OCI-LY7 (cell line): ENCODE measurements at regions of chr3 and their contacts with region 1.

Region 1: DNA sequence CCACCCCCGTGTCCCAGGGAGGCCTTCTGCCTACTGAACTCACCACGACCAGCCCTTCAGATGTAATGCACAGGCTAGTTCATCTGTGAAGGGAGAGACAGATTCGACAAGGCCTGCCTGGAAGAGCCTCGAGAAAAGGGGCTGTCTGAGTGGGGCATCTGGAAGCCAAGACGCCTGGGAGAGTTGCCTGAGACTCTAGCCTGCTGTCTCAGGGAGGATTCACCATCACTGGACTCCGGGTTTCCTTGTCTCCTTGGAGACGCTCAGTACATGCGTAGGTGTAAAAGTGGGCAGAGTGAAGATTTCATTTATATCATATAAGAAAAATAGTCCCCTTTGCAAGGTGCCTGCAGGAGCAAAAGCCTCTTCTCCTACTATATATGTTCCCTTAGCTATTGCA is 468.9 kb downstream of the FOXP1 start:
- DNase-seq: no peak
- H3K4me3 ChIP-seq: no peak overlapping the region
- H3K27ac ChIP-seq: no peak overlapping the region
- H3K4me1 ChIP-seq: peaks cover 20% of the 10 kb centered on the region
- CTCF ChIP-seq: no peak

Region 2: GRCh38 chr3:71102111-71102983 is 12.3 kb before region 1 on chr3:
- CTCF ChIA-PET with region 1: no interaction called
- POLR2A ChIA-PET with region 1: interaction called, 11 read pairs
- intact Hi-C with region 1: no loop called
- DNase-seq: no peak
- H3K4me3 ChIP-seq: no peak overlapping the region
- H3K27ac ChIP-seq: no peak overlapping the region
- H3K4me1 ChIP-seq: no peaks in the 10 kb centered on the region
- CTCF ChIP-seq: no peak

Region 3: DNA sequence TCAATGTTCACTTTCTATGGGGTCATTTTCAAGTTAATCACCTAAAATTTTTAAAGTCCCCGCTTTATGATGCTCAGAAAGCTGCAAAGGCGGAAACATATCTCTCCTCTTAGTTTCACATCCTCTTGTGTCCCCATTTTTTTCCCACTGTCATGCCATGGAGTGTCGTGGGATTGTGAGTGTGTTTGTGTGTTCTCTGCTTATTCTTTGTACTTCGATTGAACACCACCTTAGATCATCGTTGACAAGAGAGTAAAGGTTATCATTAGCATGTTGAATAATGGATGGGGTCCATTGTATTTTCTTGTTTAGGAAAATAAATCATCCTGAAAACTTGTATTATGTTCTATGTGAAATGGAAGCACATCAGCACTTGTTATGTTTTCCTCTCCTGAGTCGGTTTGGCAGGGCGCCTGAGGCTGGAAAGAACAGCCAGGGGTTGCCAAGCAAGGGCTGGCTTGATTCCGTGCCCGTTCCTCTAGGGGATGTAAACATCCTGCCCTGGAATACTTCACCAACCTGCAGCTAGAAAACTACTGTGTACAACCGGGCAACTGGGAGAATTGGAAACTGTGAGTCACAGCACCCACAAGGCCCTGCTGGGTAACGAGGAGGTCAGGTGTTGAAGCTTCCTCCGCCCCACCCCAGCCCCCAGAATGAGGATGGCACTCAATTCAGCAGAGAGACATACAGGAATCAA is 543.4 kb after region 1 on chr3:
- CTCF ChIA-PET with region 1: no interaction called
- POLR2A ChIA-PET with region 1: no interaction called
- intact Hi-C with region 1: no loop called
- DNase-seq: no peak
- H3K4me3 ChIP-seq: no peak overlapping the region
- H3K27ac ChIP-seq: no peak overlapping the region
- H3K4me1 ChIP-seq: peaks cover 68% of the 10 kb centered on the region
- CTCF ChIP-seq: no peak